ENCODE measurements at regions of chr12 and their contacts with region 1.

Region 1: DNA sequence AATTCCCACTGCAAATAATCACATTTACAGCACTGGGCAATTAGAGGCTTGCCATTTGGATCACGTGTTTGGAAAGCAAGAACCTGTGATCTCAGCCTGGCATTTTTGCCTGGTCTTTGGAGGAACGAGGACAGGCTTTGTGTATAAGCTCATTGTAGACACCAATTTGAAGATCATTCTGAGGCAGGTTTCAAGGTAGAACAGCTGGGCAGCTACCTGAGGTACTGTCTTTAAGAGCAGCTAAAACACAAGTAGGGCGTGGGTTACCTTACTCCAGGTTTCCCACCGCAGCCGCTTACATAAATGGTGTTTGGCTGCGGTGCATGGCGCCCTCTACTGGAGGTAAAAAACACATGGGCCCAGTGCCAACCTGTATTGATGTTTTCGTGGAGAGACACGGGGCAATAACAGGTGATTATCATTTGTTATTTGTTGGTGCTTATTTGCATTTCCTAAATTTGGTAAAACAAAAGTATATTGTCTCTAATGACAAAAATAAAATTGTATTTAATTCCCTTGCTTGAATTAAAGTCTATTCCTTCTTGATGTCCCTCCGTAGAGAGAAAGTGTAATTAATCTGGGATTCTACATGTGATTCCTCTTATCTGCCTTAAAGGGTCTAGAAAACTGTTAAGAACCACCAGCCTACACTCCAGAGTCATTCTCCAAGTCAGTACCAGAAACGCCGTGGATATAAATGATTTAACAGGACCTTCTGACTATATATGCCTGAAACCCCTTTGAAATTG is 69.7 kb downstream of the SVOP start:
- DNase-seq: peak; percentile 67 to 76
- H3K4me3 ChIP-seq: no peak overlapping the region
- H3K27ac ChIP-seq: no peak overlapping the region
- H3K4me1 ChIP-seq: no peaks in the 10 kb centered on the region
- H3K27me3 ChIP-seq: no peaks in the 10 kb centered on the region
- CTCF ChIP-seq: peak; percentile 70 to 92 (median 84)
- POLR2A ChIP-seq: no peak

Region 2: GRCh38 chr12:108640802-108641445 is 310.2 kb before region 1 on chr12:
- intact Hi-C with region 1: loop called (anchors 10 kb)
- DNase-seq: no peak
- H3K4me3 ChIP-seq: no peak overlapping the region
- H3K27ac ChIP-seq: no peak overlapping the region
- H3K4me1 ChIP-seq: peaks cover 23 to 61% of the 10 kb centered on the region in 2 donors
- H3K27me3 ChIP-seq: no peaks in the 10 kb centered on the region
- CTCF ChIP-seq: no peak
- POLR2A ChIP-seq: no peak

Region 3: DNA sequence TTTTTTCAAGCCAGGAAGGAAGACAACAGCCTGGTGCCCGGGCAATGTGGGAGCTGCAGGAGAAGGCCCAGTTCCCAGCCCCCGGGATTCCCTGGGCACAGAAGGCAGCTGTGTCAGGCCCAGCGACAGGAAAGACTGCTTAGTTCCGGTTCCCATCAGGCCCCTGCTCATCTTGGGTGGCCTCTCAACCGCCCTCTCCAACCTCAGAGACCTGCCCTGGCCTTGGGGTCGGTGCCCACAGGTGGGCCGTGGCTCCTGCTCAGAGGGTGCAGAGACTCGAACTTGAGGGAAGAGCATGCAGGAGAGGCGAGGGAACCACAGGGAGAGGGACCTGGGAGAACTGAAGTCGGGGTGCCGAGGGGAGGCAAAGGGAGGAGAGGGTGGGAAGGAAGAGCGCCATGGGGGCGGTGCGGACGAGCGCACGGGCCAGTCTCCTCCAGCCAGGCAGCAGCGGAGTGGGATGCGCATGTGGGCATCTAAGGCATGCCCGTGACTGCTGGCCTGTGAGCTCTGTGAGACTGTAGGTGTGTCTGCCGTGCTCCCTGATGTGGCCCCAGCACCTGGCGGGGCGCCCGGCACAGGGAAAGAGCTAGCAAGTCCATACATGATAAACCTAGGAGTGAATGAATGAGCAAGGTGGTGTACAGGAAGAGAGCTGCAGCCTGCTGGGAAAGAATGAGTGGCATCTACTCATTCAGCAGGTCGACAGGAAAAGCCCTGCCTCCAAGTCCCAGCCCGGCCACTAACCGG is 136.5 kb before region 1 on chr12:
- intact Hi-C with region 1: loop called (anchors 5 kb)
- DNase-seq: peak; percentile 49 to 54
- H3K4me3 ChIP-seq: no peak overlapping the region
- H3K27ac ChIP-seq: peak overlapping the region; percentile 82 to 85 (median 83)
- H3K4me1 ChIP-seq: peaks cover 31 to 43% of the 10 kb centered on the region in 2 donors
- H3K27me3 ChIP-seq: no peaks in the 10 kb centered on the region
- CTCF ChIP-seq: no peak
- POLR2A ChIP-seq: no peak

Region 4: DNA sequence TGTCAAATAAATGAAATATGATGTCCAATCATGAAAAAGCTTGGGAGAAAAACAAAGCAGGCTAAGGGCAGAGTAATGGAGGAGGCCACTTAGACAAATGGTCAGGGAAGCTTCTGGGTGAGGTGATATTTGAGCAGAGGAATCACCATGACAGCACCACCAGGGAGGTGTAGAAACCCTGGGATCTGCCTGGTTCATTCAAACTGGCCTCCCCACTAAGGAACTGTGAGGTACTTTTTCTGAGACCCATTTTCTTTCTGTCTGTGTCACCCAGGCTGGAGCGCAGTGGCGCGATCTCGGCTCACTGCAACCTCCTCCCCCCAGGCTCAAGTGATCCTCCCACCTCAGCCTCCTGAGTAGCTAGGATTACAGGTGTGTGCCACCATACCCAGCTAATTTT is 86.0 kb before region 1 on chr12:
- intact Hi-C with region 1: loop called (anchors 5 kb)
- DNase-seq: no peak
- H3K4me3 ChIP-seq: no peak overlapping the region
- H3K27ac ChIP-seq: no peak overlapping the region
- H3K4me1 ChIP-seq: no peaks in the 10 kb centered on the region
- H3K27me3 ChIP-seq: no peaks in the 10 kb centered on the region
- CTCF ChIP-seq: no peak
- POLR2A ChIP-seq: no peak

Measured in thyroid gland (tissue), 4 donors.